CD14-positive monocyte (primary cell): ENCODE measurements at regions of chr13 and their contacts with region 1.

Region 1: DNA sequence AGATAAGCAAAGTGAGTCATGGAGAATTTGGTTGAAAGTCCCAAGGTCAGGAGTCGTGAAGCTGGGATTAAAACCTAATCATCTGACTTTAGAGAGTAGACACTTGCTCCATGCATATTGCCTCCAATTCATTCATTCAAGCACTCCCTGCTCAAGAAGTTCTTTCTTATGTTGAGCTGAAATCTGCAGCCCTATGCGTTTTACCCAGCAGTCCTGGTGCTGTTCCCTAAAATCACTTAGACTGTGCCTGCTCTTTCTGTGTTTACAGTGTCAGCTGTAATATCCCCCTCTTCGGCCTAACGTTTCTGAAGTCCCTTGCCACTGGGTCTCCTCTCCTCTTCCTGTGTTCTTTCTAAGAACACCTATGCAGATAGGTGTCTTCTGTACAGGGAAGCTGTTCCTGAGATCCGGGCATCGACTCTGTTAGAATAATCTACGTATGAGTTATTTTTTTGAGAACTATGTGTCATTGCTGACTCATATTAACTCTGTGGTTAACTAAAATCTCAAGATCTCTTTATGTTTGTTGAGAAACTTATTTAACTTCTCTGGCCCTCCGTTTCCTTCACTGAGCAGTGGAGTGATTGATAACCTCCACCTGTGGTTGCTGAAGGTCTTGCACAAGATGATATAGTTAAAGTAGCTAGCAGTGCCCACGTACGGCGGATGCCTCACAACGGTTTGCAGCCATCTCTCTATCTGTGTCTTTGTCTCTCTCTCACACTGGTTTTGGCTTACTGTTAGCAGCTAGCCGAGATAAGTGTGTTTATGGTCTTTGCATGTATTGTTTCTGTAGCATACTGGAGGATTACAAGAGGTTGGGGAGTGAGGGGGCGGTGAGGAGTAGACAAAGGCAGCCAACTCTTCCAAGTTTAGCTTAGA is 4.7 kb downstream of the ALOX5AP start:
- DNase-seq: peak; percentile 74 to 93 (median 88)
- H3K4me3 ChIP-seq: peak overlapping the region in 2 of 3 experiments; percentile 47 to 64
- H3K4me3 Mint-ChIP-seq: peak overlapping the region; percentile 80 to 86
- H3K27ac ChIP-seq: peak overlapping the region; percentile 40 to 89
- H3K27ac Mint-ChIP-seq: peak overlapping the region; percentile 91 to 98 (median 97)
- H3K4me1 ChIP-seq: peaks cover 90 to 99% of the 10 kb centered on the region in 2 donors
- H3K4me1 Mint-ChIP-seq: peaks cover 92% of the 10 kb centered on the region
- H3K27me3 ChIP-seq: no peaks in the 10 kb centered on the region
- H3K27me3 Mint-ChIP-seq: peaks cover 7 to 11% (median 10%) of the 10 kb centered on the region in 3 donors
- CTCF ChIP-seq: no peak

Region 2: DNA sequence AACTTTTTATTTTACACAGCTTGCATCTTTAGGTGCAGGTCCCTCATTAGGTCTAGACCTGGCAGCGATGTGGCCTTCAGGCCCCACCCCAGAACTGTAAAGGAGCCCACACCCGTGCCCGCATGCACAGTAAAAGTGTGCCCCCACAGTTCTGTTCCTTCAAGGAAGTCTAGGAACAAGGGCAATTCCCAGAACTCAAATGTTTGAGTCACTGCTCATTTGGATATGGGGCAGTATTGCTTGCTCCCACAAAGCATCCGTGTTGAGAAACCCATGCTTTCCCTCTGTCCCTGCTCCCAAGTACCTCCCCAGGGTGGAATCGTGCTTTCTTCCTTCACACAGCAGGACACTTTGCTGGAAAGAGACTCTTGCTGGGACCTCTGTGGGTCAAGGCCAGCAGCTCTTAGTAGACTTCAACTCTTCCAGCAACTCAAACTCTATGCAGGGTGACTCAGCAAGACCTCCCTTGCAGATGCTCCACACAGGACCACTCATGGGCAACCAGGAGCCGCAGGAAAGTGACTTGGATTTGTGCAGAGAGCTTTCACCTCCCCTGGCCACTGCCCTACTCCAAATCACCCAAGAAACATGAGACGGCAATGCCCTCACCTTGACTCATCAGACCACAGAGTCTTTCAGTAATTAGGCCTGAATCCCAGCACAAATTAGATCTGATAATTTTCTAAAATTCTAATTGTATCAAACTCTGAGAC is 1156.8 kb before region 1 on chr13:
- intact Hi-C with region 1: no loop called
- DNase-seq: no peak
- H3K4me3 ChIP-seq: no peak overlapping the region
- H3K4me3 Mint-ChIP-seq: no peak overlapping the region
- H3K27ac ChIP-seq: no peak overlapping the region
- H3K27ac Mint-ChIP-seq: peak overlapping the region in 1 of 7 donors; percentile 13
- H3K4me1 ChIP-seq: no peaks in the 10 kb centered on the region
- H3K4me1 Mint-ChIP-seq: peaks cover 4% of the 10 kb centered on the region
- H3K27me3 ChIP-seq: no peaks in the 10 kb centered on the region
- H3K27me3 Mint-ChIP-seq: no peaks in the 10 kb centered on the region
- CTCF ChIP-seq: no peak

Region 3: DNA sequence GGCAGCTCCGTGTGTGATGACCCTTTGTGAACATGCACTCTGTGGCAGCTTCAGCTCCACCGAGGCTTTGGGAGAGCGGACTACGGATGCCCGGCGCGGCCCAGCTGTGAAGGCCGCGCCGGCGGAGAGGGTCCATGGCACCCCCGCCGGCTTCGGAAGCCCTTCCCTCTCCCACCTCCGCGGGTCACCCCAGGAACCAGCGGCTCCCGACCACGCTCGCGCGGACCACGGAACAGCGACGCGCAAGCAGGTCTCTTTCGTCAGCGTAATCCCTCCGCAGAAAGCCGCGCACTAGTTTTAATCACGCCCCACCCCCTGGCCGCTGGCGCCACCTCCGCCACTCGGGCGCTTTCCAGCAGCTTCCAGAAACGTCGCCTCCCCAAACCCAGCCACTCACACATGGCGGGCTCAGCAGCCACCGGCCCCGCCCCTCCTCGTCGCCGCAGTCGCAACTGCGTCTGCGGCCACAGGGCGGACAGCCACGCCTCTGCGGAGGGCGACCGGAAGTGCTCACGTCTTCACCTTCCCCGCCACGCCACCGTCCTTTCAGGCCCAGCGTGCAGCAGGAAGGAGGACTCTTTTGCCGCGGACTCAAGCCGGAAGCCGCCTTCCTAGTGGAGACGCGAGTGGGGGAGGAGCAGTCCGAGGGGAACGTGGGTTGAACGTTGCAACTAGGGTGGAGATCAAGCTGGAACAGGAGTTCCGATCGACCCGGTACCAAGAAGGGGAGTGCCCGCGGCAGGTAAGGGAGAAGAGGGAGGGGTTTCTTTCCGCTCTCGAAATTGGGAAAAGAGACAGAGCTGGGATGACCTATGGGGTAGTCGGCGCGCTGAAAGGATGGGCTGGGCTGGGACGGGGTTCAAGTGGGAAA is 122.5 kb before region 1 on chr13 and contains the start of gene USPL1:
- intact Hi-C with region 1: loop called in 1 of 2 experiments (anchors 5 kb)
- DNase-seq: peak; percentile 97 to 99 (median 99)
- H3K4me3 ChIP-seq: peak within 1 kb of the TSS; percentile 95 to 100 (median 98)
- H3K4me3 Mint-ChIP-seq: no peak within 1 kb of the TSS
- H3K27ac ChIP-seq: peak within 1 kb of the TSS; percentile 100
- H3K27ac Mint-ChIP-seq: no peak within 1 kb of the TSS
- H3K4me1 ChIP-seq: peaks cover 28 to 34% of the 10 kb centered on the region in 2 donors
- H3K4me1 Mint-ChIP-seq: peaks cover 5% of the 10 kb centered on the region
- H3K27me3 ChIP-seq: no peaks in the 10 kb centered on the region
- H3K27me3 Mint-ChIP-seq: no peaks in the 10 kb centered on the region
- CTCF ChIP-seq: peak; percentile 19
- polyA plus RNA-seq, gene USPL1: 3.9 to 20.5 (median 5.5) TPM

Region 4: DNA sequence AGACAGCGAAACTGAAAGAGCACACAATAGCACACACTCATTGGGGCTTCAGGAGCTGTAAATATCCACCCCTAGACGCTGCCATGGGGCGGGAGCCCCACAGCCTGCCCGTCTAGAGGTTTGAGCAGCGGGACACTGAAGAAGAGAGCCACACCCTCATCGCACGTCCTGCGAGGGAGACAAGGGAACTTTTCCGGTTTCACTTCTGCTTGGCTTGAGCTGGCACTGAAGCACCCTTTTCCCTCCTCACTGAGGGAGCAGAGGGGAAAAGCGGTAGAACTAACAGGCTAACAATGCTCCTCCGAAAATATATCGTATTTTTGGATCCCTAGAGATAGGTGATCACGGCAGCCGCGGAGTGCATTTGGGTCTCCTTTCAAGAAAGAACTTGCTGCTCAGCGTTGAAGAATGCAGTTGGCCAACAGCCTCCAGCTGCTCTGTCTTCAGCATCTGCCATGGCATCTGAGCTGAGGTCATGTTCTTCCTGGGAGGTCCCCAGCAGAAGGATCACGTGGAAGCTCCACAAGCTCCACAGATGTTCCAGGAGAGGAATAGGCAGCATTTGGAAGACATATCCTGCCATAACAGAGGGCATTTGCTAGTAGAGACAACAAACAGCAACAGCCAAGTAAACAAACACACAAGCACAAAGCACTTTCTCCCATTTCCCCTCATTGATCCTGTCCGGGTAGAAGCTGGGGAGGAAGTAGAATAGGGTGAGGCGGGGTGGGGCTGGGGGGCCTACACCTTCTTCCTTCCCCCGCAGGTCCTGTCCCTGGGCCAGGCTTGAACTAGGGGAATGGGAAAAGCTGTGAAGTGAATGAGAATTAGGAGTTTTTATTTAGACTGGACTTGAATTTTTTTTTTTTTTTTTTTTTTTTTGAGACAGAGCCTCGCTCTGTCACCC is 49.5 kb before region 1 on chr13:
- intact Hi-C with region 1: loop called in 1 of 2 experiments (anchors 10 kb)
- DNase-seq: peak; percentile 89 to 91 (median 90)
- H3K4me3 ChIP-seq: peak overlapping the region; percentile 16 to 66 (median 17)
- H3K4me3 Mint-ChIP-seq: peak overlapping the region; percentile 73 to 87
- H3K27ac ChIP-seq: peak overlapping the region; percentile 64 to 86
- H3K27ac Mint-ChIP-seq: peak overlapping the region; percentile 90 to 97 (median 94)
- H3K4me1 ChIP-seq: peaks cover 32 to 40% of the 10 kb centered on the region in 2 donors
- H3K4me1 Mint-ChIP-seq: peaks cover 39% of the 10 kb centered on the region
- H3K27me3 ChIP-seq: no peaks in the 10 kb centered on the region
- H3K27me3 Mint-ChIP-seq: peaks cover 0 to 6% (median 5%) of the 10 kb centered on the region in 3 donors
- CTCF ChIP-seq: no peak

Region 5: DNA sequence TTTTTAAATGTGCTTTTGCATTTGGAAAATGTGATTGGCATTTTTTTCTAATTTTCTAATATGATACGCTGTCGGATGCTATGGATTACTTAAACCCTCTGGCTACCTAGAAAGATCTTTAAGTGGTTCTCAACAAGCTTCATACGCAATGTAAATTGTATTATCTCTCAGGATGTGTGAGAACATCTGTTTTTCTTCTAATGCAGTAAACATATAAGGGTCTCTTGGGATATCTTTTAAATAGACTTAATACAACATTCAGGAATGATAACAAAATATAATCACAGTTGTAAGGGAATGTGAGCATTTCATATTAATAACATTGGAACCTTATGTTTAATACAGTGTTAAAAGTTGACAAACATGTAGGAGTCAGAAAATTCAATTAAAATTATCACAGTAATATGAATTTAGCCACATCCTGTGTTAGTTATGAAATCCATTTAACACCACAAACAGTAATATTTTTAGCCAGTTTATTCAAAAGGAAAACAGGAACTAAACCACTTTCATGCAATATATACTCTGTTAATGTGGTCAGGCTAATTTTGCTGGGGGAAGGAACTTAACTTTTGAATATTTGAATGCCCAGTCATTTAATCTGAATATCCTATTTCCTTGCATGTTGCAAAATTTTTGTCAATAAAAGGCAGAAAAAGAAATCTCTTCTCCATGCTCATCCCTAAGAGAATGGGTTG is 19.7 kb before region 1 on chr13:
- intact Hi-C with region 1: loop called in 1 of 2 experiments (anchors 2 kb)
- DNase-seq: peak; percentile 70 to 90 (median 76)
- H3K4me3 ChIP-seq: peak overlapping the region in 1 of 3 experiments; percentile 39
- H3K4me3 Mint-ChIP-seq: peak overlapping the region in 1 of 2 donors; percentile 84
- H3K27ac ChIP-seq: peak overlapping the region in 1 of 2 donors; percentile 45
- H3K27ac Mint-ChIP-seq: peak overlapping the region; percentile 33 to 93 (median 83)
- H3K4me1 ChIP-seq: peaks cover 58 to 72% of the 10 kb centered on the region in 2 donors
- H3K4me1 Mint-ChIP-seq: peaks cover 75% of the 10 kb centered on the region
- H3K27me3 ChIP-seq: peaks cover 53 to 63% of the 10 kb centered on the region in 2 donors
- H3K27me3 Mint-ChIP-seq: peaks cover 54 to 70% (median 66%) of the 10 kb centered on the region in 3 donors
- CTCF ChIP-seq: no peak

Region 6: GRCh38 chr13:30802953-30803478 is 63.0 kb after region 1 on chr13:
- intact Hi-C with region 1: loop called (anchors 5 to 10 kb)
- DNase-seq: peak; percentile 85 to 88 (median 87)
- H3K4me3 ChIP-seq: peak overlapping the region in 1 of 3 experiments; percentile 60
- H3K4me3 Mint-ChIP-seq: peak overlapping the region; percentile 70 to 87
- H3K27ac ChIP-seq: no peak overlapping the region
- H3K27ac Mint-ChIP-seq: peak overlapping the region in 6 of 7 donors; percentile 8 to 81 (median 62)
- H3K4me1 ChIP-seq: peaks cover 26 to 29% of the 10 kb centered on the region in 2 donors
- H3K4me1 Mint-ChIP-seq: peaks cover 32% of the 10 kb centered on the region
- H3K27me3 ChIP-seq: no peaks in the 10 kb centered on the region
- H3K27me3 Mint-ChIP-seq: peaks cover 3 to 11% (median 3%) of the 10 kb centered on the region in 3 donors
- CTCF ChIP-seq: peak; percentile 98

Region 7: DNA sequence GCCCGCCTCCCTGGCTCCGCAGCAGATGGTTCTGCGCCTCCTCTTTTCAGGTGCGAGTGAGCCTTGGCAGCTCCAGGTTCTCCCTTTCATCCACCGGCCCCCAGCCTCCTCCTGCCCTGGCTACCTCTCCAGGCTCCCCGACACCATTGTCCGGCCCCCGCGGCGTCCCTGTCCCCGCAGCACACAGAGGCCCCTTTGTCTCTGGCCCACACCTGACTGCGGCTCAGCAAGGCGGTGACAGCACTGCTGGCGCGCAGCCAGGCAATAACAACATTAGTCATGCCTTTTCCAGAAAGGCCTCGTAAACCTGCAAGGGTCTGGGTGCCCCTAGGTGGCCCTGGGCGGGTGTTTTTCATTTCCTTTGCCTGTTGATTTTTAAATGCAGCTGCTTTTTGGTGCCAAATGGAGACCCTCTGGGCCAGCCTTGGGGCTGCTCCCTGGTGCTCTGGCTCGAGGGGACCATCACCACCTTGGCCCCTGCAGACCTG is 92.9 kb after region 1 on chr13:
- intact Hi-C with region 1: no loop called
- DNase-seq: peak in 1 of 3 donors; percentile 16
- H3K4me3 ChIP-seq: no peak overlapping the region
- H3K4me3 Mint-ChIP-seq: no peak overlapping the region
- H3K27ac ChIP-seq: no peak overlapping the region
- H3K27ac Mint-ChIP-seq: no peak overlapping the region
- H3K4me1 ChIP-seq: peaks cover 4 to 8% of the 10 kb centered on the region in 2 donors
- H3K4me1 Mint-ChIP-seq: peaks cover 6% of the 10 kb centered on the region
- H3K27me3 ChIP-seq: peaks cover 0 to 9% of the 10 kb centered on the region in 2 donors
- H3K27me3 Mint-ChIP-seq: peaks cover 9 to 20% (median 15%) of the 10 kb centered on the region in 3 donors
- CTCF ChIP-seq: no peak

Region 8: GRCh38 chr13:30963791-30964190 is 223.8 kb after region 1 on chr13:
- intact Hi-C with region 1: no loop called
- DNase-seq: no peak
- H3K4me3 ChIP-seq: no peak overlapping the region
- H3K4me3 Mint-ChIP-seq: no peak overlapping the region
- H3K27ac ChIP-seq: no peak overlapping the region
- H3K27ac Mint-ChIP-seq: no peak overlapping the region
- H3K4me1 ChIP-seq: no peaks in the 10 kb centered on the region
- H3K4me1 Mint-ChIP-seq: no peaks in the 10 kb centered on the region
- H3K27me3 ChIP-seq: no peaks in the 10 kb centered on the region
- H3K27me3 Mint-ChIP-seq: peaks cover 2 to 14% (median 4%) of the 10 kb centered on the region in 3 donors
- CTCF ChIP-seq: no peak